ENCODE measurements at regions of chr17 and their contacts with region 1.

Region 1: GRCh38 chr17:74296548-74296936 is 22.5 kb downstream of the DNAI2 start:
- DNase-seq: peak; percentile 60 to 73
- ATAC-seq: peak; percentile 87
- H3K4me3 ChIP-seq: no peak overlapping the region
- H3K27ac ChIP-seq: no peak overlapping the region
- H3K4me1 ChIP-seq: peaks cover 7% of the 10 kb centered on the region; the same call in 2 of the 3 replicates
- CTCF ChIP-seq: peak; percentile 53
- EP300 ChIP-seq: no peak
- POLR2A ChIP-seq: no peak
- RAD21 ChIP-seq: peak; percentile 31 to 48; a peak in 3 of 5 replicates

Region 2: GRCh38 chr17:74212913-74213791 is 83.4 kb before region 1 on chr17 and contains the start of gene TTYH2:
- CTCF ChIA-PET with region 1: interaction called, 62 read pairs
- POLR2A ChIA-PET with region 1: interaction called, 4 read pairs
- DNase-seq: peak; percentile 77 to 84
- ATAC-seq: peak; percentile 36 to 75
- H3K4me3 ChIP-seq: peak within 1 kb of the TSS; percentile 32
- H3K27ac ChIP-seq: peak within 1 kb of the TSS; percentile 39 to 76
- H3K4me1 ChIP-seq: peaks cover 30% of the 10 kb centered on the region; the same call in 2 of the 3 replicates
- CTCF ChIP-seq: peak; percentile 18; the same call in 2 of the 3 replicates
- EP300 ChIP-seq: no peak
- POLR2A ChIP-seq: peak; percentile 49
- RAD21 ChIP-seq: no peak
- polyA plus RNA-seq, gene TTYH2: 1.4 and 1.5 TPM in 2 replicates

Region 3: DNA sequence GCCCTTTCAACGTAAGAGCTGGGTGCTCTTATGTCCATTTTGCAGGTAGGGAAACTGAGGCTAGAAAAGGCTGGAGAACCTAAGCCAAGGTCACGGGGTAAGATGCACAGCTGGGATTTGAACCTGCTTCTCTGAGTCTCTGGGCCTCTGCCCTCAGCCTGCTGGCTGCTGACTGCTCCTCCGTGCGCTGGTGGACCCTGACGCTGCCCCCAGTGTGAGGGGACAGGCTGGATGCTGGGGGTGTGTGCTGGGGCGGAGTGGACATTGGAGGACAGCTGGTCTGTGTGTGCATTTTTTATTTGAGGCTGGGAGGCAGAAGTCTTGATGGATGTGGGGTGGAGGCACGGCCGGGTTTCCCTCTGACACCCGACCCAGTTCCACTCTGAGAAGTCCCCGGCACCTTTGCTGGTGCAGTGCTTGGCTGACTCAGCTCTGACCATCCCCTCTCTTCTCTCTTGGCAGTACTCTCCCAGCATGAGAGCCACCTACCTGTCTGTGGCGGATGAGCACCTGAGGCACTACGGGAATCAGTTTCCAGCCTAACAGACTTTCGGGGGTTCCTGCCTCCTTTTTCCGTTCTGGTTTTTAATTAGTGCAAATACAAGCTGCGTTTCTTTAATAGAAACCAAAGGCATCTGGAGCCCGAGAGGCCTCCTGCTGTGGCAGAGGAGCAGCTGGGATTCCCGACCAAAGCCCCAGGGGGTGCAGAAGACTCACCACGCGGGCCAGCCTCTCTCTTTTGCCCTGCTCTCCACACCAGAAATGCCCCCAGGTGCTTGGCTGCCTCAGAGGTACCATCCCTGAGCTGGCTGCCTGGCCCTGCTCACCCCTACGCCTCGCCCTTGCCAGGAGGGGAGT is 36.6 kb before region 1 on chr17:
- CTCF ChIA-PET with region 1: interaction called, 13 read pairs
- POLR2A ChIA-PET with region 1: no interaction called
- DNase-seq: no peak
- ATAC-seq: peak; percentile 54 to 59; a peak in 4 of 6 replicates
- H3K4me3 ChIP-seq: no peak overlapping the region
- H3K27ac ChIP-seq: no peak overlapping the region
- H3K4me1 ChIP-seq: no peaks in the 10 kb centered on the region
- CTCF ChIP-seq: no peak
- EP300 ChIP-seq: no peak
- POLR2A ChIP-seq: no peak
- RAD21 ChIP-seq: no peak

Region 4: GRCh38 chr17:74280093-74280513 is 16.4 kb before region 1 on chr17:
- CTCF ChIA-PET with region 1: interaction called, 125 read pairs
- POLR2A ChIA-PET with region 1: interaction called, 4 read pairs
- DNase-seq: no peak
- ATAC-seq: no peak
- H3K4me3 ChIP-seq: no peak overlapping the region
- H3K27ac ChIP-seq: no peak overlapping the region
- H3K4me1 ChIP-seq: 0 out of 3 replicates have a peak, but pooled peaks cover 4% of the 10 kb centered on the region
- CTCF ChIP-seq: no peak
- EP300 ChIP-seq: no peak
- POLR2A ChIP-seq: no peak
- RAD21 ChIP-seq: no peak

Region 5: GRCh38 chr17:74351552-74352210 is 55.1 kb after region 1 on chr17:
- CTCF ChIA-PET with region 1: interaction called, 16 read pairs
- POLR2A ChIA-PET with region 1: no interaction called
- DNase-seq: peak in 1 of 2 experiments; percentile 66
- ATAC-seq: peak; percentile 59 to 69
- H3K4me3 ChIP-seq: peak overlapping the region; percentile 10; the same call in 1 of the 3 replicates
- H3K27ac ChIP-seq: no peak overlapping the region
- H3K4me1 ChIP-seq: 0 out of 3 replicates have a peak, but pooled peaks cover 11% of the 10 kb centered on the region
- CTCF ChIP-seq: peak; percentile 26; the same call in 2 of the 3 replicates
- EP300 ChIP-seq: no peak
- POLR2A ChIP-seq: no peak
- RAD21 ChIP-seq: no peak

Region 6: GRCh38 chr17:74386386-74386785 is 89.8 kb after region 1 on chr17:
- CTCF ChIA-PET with region 1: no interaction called
- POLR2A ChIA-PET with region 1: no interaction called
- DNase-seq: no peak
- ATAC-seq: no peak
- H3K4me3 ChIP-seq: no peak overlapping the region
- H3K27ac ChIP-seq: no peak overlapping the region
- H3K4me1 ChIP-seq: no peaks in the 10 kb centered on the region
- CTCF ChIP-seq: no peak
- EP300 ChIP-seq: no peak
- POLR2A ChIP-seq: no peak
- RAD21 ChIP-seq: no peak

Region 7: GRCh38 chr17:74690409-74690825 is 393.9 kb after region 1 on chr17:
- CTCF ChIA-PET with region 1: no interaction called
- POLR2A ChIA-PET with region 1: no interaction called
- DNase-seq: no peak
- ATAC-seq: peak; percentile 24 to 59; a peak in 1 of 6 replicates
- H3K4me3 ChIP-seq: no peak overlapping the region
- H3K27ac ChIP-seq: no peak overlapping the region
- H3K4me1 ChIP-seq: no peaks in the 10 kb centered on the region
- CTCF ChIP-seq: no peak
- EP300 ChIP-seq: no peak
- POLR2A ChIP-seq: no peak
- RAD21 ChIP-seq: no peak